ENCODE measurements at regions of chr9 and their contacts with region 1.

Region 1: GRCh38 chr9:94014065-94014654 is 59.0 kb upstream of the BARX1 start:
- DNase-seq: no peak
- H3K4me3 ChIP-seq: no peak overlapping the region
- H3K27ac ChIP-seq: no peak overlapping the region
- H3K27me3 ChIP-seq: no peaks in the 10 kb centered on the region
- CTCF ChIP-seq: peak; percentile 72

Region 2: DNA sequence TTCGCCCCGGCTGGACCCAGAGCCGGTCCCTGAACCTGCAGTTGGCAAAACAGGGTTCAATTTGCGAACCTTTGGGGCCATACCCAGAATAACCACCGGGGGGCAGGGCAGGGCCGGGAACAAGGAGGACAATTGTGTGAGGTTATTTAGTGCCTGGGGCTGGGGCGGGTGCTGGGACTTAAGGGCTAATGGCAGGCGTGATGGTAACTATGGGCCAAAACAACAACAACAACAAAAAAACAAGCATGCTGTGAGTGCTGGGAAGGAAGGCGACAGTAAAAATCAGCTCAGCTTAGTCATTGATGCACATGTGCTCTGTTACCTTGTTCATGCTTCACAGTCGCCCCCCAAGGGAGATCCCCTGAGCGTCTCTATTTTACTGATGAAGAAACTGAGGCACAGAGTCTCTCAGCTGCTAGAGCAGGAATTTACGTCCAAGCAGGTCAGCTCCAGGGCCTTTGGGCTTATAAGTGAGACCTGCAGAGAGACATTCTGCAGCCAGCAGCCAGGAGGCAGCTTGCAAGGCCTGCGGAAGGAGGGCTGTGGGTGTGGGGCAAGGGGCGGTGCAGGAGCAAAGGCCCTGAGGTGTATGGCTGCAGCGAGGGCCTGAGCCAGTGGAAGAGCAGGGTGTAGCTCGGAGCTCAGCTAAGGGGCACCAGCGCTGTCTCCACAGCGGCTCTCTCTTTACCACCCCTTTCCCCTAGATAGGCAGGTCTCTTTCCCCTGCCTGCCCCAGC is 331.8 kb before region 1 on chr9:
- CTCF ChIA-PET with region 1: interaction called, 10 read pairs
- POLR2A ChIA-PET with region 1: no interaction called
- DNase-seq: no peak
- H3K4me3 ChIP-seq: no peak overlapping the region
- H3K27ac ChIP-seq: no peak overlapping the region
- H3K27me3 ChIP-seq: no peaks in the 10 kb centered on the region
- CTCF ChIP-seq: peak; percentile 84

Region 3: DNA sequence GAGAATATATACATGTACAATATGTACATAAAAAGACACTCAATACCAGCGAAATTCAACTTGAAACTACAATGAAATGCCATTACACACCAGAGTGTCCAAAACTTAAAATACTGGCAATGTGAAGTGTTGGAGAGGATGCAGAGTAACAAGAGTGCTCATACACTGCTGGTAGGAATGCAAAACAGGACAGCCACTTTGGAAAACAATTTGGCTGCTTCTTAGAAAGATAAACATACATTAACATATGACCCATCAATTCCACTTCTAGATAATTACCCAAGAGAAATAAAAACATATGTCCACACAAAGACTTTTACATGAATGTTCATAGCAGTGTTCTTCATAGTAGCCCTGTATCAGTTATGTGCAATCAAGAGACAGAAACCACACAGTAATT is 19.6 kb before region 1 on chr9:
- CTCF ChIA-PET with region 1: no interaction called
- POLR2A ChIA-PET with region 1: no interaction called
- DNase-seq: no peak
- H3K4me3 ChIP-seq: no peak overlapping the region
- H3K27ac ChIP-seq: no peak overlapping the region
- H3K27me3 ChIP-seq: peaks cover 4% of the 10 kb centered on the region
- CTCF ChIP-seq: no peak

Region 4: DNA sequence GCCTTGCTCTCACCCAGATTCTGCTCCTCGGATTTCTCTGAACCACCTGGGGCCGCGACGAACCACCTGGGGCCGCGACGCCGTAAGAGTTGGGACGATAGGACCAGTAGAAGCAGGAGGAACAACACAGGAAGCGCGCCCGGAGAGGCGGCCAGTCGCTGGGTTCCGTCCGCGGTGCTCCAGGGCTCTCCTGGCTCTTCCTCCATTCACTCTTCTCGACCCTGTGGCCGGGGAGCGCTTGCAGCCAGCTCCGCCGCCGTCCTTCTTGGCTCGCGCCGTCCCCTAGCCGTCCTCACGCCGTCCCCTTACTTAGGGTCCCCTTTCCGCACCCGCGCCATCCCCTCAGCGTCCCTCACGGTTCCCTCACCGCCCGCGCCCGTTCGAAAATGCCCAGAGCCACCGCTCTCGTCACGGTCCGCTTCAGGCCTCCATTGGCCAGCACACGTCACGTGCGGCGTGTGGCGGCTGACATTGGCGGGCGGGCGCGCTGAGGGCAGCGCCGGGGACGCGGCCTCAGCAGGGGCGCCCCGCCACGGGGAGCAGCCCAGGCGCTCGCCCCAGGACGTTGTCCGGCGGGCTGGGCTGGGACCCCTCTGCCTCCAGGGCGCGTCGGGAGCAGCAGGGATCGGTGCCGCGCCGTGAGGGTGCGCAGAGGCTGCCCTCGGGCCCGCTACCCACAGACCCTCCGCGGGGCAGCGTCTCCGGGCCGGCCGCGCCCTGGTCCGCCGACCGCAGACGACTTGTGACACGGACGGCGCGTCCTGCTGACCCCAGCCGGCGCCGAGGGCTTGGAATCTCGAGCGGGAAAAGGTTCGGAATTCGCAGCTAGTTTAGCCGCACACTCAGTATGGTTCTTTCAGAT is 16.4 kb after region 1 on chr9:
- CTCF ChIA-PET with region 1: interaction called, 21 read pairs
- POLR2A ChIA-PET with region 1: no interaction called
- DNase-seq: peak; percentile 47
- H3K4me3 ChIP-seq: peak overlapping the region; percentile 87
- H3K27ac ChIP-seq: peak overlapping the region; percentile 35
- H3K27me3 ChIP-seq: no peaks in the 10 kb centered on the region
- CTCF ChIP-seq: no peak

Region 5: DNA sequence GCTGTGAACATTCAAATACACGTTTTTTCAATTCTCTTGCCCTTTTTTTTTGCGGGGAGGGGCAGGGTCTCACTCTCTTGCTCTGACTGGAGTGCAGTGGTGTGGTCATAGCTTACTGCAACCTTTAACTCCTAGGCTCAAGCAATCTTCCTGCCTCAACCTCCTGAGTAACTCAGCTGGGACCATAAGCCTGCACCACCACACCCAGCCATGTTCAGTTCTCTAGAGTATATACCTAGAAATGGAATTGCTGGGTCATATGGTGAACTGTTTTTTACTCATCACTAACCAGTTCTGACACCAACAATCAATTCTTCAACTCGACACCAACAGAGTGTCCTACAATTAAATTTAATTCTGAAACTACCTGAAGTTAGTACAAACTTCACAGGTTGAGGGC is 159.5 kb after region 1 on chr9:
- CTCF ChIA-PET with region 1: interaction called, 11 read pairs
- POLR2A ChIA-PET with region 1: no interaction called
- DNase-seq: no peak
- H3K4me3 ChIP-seq: no peak overlapping the region
- H3K27ac ChIP-seq: no peak overlapping the region
- H3K27me3 ChIP-seq: no peaks in the 10 kb centered on the region
- CTCF ChIP-seq: no peak